ENCODE measurements at regions of chrX and their contacts with region 1.

Region 1: GRCh38 chrX:19334945-19335626 is 8.6 kb upstream of the PDHA1 start:
- DNase-seq: no peak
- H3K4me3 ChIP-seq: no peak overlapping the region
- H3K27ac ChIP-seq: no peak overlapping the region
- H3K27me3 ChIP-seq: no peaks in the 10 kb centered on the region
- CTCF ChIP-seq: peak; percentile 15; the same call in 1 of the 2 replicates

Region 2: GRCh38 chrX:18377796-18378195 is 957.3 kb before region 1 on chrX:
- CTCF ChIA-PET with region 1: interaction called, 10 read pairs
- POLR2A ChIA-PET with region 1: no interaction called
- DNase-seq: no peak
- H3K4me3 ChIP-seq: no peak overlapping the region
- H3K27ac ChIP-seq: no peak overlapping the region
- H3K27me3 ChIP-seq: peaks cover 2% of the 10 kb centered on the region
- CTCF ChIP-seq: peak; percentile 60

Region 3: DNA sequence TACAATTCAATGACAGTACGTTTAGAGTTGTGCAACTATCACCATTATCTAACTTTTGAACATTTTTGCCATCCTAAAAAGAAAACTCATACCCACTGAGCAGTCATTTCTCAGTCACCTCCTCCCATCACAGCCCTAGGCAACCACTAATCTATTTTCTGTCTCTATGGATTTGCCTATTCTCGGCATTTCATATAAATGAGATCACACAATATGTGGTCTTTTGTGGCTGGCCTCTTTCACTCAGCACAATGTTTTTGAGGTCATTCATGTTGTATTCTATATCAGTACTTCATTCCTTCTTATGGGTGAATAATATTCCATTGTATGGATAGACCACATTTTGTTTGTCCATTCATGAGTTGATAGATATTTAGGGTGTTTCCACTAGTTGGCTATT is 524.7 kb before region 1 on chrX:
- CTCF ChIA-PET with region 1: no interaction called
- POLR2A ChIA-PET with region 1: no interaction called
- DNase-seq: no peak
- H3K4me3 ChIP-seq: no peak overlapping the region
- H3K27ac ChIP-seq: no peak overlapping the region
- H3K27me3 ChIP-seq: no peaks in the 10 kb centered on the region
- CTCF ChIP-seq: no peak

Region 4: DNA sequence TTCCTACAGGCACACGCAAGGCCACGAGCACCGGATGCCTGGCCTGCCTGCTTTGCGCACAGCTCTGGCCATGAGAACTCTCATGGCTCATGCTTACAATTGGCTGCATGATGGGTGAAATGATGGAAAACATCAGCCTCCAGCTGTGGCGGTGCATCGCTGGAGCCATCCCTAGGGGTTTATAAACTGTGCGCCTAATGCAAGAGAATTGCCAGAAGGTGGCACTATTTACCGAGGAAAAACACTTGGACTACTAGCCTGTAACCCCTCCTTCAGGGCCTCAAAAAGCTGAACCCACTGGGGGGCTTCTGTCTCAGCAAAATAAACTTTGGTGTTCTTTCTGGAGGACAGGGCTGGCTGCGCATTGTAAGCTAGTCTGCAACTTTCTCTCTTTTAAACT is 403.1 kb before region 1 on chrX:
- CTCF ChIA-PET with region 1: interaction called, 51 read pairs
- POLR2A ChIA-PET with region 1: no interaction called
- DNase-seq: no peak
- H3K4me3 ChIP-seq: no peak overlapping the region
- H3K27ac ChIP-seq: no peak overlapping the region
- H3K27me3 ChIP-seq: no peaks in the 10 kb centered on the region
- CTCF ChIP-seq: peak; percentile 53

Region 5: GRCh38 chrX:18961686-18962085 is 373.4 kb before region 1 on chrX:
- CTCF ChIA-PET with region 1: no interaction called
- POLR2A ChIA-PET with region 1: no interaction called
- DNase-seq: no peak
- H3K4me3 ChIP-seq: no peak overlapping the region
- H3K27ac ChIP-seq: peak overlapping the region; percentile 11
- H3K27me3 ChIP-seq: no peaks in the 10 kb centered on the region
- CTCF ChIP-seq: no peak

Region 6: GRCh38 chrX:19030805-19031204 is 304.3 kb before region 1 on chrX:
- CTCF ChIA-PET with region 1: interaction called, 10 read pairs
- POLR2A ChIA-PET with region 1: no interaction called
- DNase-seq: no peak
- H3K4me3 ChIP-seq: no peak overlapping the region
- H3K27ac ChIP-seq: no peak overlapping the region
- H3K27me3 ChIP-seq: no peaks in the 10 kb centered on the region
- CTCF ChIP-seq: no peak

Region 7: GRCh38 chrX:19372170-19372546 is 37.1 kb after region 1 on chrX:
- CTCF ChIA-PET with region 1: interaction called, 11 read pairs
- POLR2A ChIA-PET with region 1: no interaction called
- DNase-seq: peak; percentile 24
- H3K4me3 ChIP-seq: peak overlapping the region; percentile 55
- H3K27ac ChIP-seq: no peak overlapping the region
- H3K27me3 ChIP-seq: no peaks in the 10 kb centered on the region
- CTCF ChIP-seq: peak; percentile 78

Measured in AG04450 (cell line).